BJ (cell line): ENCODE measurements at regions of chr5 and their contacts with region 1.

Region 1: DNA sequence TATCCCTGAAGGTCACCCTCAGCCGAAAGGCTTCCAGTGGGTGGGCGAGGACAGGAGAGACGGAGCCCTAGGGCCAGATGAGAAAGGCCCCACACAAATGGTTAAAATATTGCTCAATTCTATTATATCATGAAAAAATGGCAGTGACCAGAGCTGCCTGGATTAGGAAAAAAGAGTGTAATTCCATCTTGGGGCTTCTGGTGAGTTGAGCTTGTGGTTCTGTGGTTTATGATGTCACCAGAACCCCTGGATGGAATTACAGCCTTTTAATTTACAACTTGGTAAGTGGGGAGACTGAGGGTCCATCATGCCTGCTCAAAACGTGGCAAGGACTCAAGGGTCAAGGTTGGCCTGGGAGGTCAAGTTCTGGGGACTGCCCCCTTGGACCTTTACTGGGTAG is 55.5 kb upstream of the STC2 start:
- DNase-seq: no peak
- H3K4me3 ChIP-seq: no peak overlapping the region
- H3K27me3 ChIP-seq: no peaks in the 10 kb centered on the region; the same call in 1 of the 2 replicates
- CTCF ChIP-seq: no peak

Region 2: GRCh38 chr5:173283318-173284288 is 100.1 kb before region 1 on chr5:
- CTCF ChIA-PET with region 1: no interaction called
- POLR2A ChIA-PET with region 1: interaction called, 13 read pairs
- DNase-seq: no peak
- H3K4me3 ChIP-seq: peak overlapping the region; percentile 15; the same call in 1 of the 2 replicates
- H3K27me3 ChIP-seq: peaks cover 12% of the 10 kb centered on the region
- CTCF ChIP-seq: peak; percentile 81

Region 3: DNA sequence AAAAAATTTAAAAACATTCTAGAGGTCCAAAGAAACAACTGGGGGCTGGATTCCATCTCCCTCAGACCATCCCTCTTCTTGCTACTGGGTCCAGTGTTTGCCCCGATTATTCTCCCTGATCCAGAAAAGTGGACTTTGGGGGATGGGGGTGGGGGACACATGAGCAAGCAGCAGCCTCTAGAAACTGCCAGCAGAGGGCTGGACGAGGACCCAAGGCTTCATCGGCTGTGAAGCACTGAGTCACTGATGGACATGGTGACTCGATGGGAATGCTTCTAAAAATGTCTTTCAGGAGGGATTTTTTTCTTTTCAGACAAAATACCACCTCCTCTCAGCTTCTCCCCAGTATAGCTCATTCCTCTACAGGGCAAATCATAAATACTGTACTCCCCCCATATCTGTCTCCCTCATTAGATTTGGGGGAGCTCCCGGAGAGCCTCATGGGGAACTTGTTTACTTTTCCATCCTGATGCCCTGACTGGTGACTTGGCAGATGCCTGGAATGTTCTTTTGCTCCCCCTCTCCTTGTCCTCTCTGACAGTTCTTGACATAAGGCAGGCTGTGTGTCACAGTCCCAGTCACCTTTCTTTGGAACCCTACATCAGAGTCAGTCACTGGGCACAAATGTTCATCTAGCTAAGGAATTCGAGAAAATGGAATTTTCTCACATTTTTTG is 11.7 kb after region 1 on chr5:
- CTCF ChIA-PET with region 1: interaction called, 11 read pairs
- POLR2A ChIA-PET with region 1: no interaction called
- DNase-seq: no peak
- H3K4me3 ChIP-seq: no peak overlapping the region
- H3K27me3 ChIP-seq: no peaks in the 10 kb centered on the region; the same call in none of the 2 replicates
- CTCF ChIP-seq: peak; percentile 61